ENCODE measurements at regions of chr22 and their contacts with region 1.

Region 1: GRCh38 chr22:29766632-29767170 is at the start of gene ZMAT5:
- DNase-seq: peak; percentile 97
- H3K4me3 ChIP-seq: peak within 1 kb of the TSS; percentile 61 to 92 (median 77)
- H3K27ac ChIP-seq: peak within 1 kb of the TSS; percentile 78 to 90 (median 84)
- H3K4me1 ChIP-seq: peaks cover 29 to 37% (median 32%) of the 10 kb centered on the region in 4 donors
- H3K27me3 ChIP-seq: no peaks in the 10 kb centered on the region
- CTCF ChIP-seq: no peak
- EP300 ChIP-seq: no peak
- POLR2A ChIP-seq: no peak
- total RNA-seq, gene ZMAT5: 13.3 to 33.8 (median 23.1) TPM

Region 2: DNA sequence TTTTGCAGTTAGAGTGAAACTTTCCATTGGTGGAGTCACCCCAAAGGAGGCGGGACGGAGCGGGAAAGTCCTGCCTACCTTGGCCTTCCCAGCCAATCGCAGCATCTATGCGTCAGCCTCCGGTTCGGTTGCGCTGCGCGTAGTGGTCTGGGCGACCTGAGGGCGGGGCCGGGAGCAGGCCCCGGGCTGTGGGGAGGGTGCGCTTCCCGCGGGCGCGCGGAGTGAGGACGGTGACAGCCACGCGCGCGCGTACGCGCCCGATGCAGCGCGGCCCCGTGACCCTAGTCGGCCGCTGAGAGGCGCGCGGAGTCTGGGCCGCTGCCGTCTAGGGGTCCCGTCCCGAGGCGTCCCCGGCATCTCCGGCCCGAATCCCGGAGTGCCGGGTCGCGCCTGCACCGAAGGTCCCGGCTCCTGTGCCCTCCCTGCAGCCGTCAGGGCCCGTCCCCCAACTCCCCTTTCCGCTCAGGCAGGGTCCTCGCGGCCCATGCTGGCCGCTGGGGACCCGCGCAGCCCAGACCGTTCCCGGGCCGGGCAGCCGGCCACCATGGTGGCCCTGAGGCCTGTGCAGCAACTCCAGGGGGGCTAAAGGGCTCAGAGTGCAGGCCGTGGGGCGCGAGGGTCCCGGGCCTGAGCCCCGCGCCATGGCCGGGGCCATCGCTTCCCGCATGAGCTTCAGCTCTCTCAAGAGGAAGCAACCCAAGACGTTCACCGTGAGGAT is 163.2 kb before region 1 on chr22 and contains the start of gene NF2:
- intact Hi-C with region 1: loop called (anchors 10 kb)
- DNase-seq: peak; percentile 99
- H3K4me3 ChIP-seq: peak within 1 kb of the TSS; percentile 63 to 91 (median 84)
- H3K27ac ChIP-seq: peak within 1 kb of the TSS; percentile 90 to 95 (median 94)
- H3K4me1 ChIP-seq: peaks cover 15 to 32% (median 26%) of the 10 kb centered on the region in 4 donors
- H3K27me3 ChIP-seq: no peaks in the 10 kb centered on the region
- CTCF ChIP-seq: peak in 2 of 3 experiments; percentile 2 to 8
- EP300 ChIP-seq: no peak
- POLR2A ChIP-seq: no peak
- total RNA-seq, gene NF2: 34.5 to 47.3 (median 42.0) TPM

Region 3: DNA sequence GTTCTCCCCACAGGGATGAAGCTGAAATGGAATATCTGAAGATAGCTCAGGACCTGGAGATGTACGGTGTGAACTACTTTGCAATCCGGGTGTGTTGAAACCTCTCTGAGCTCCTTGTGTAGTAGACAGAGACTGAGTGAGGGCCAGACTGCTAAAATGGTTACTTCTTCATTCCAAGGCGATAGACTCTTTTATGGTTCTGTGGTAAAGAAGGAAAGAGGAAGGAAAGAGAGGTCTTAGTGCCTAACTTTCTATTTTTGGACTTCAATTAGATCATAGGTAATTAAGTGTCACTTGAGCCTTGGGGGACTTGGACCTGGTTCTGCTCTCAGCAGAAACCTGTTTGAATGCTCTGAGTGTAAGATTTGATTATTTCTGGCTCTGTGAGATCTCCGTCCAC is 108.5 kb before region 1 on chr22:
- intact Hi-C with region 1: no loop called
- DNase-seq: no peak
- H3K4me3 ChIP-seq: no peak overlapping the region
- H3K27ac ChIP-seq: no peak overlapping the region
- H3K4me1 ChIP-seq: peaks cover 0 to 6% (median 0%) of the 10 kb centered on the region in 4 donors
- H3K27me3 ChIP-seq: no peaks in the 10 kb centered on the region
- CTCF ChIP-seq: no peak
- EP300 ChIP-seq: no peak
- POLR2A ChIP-seq: no peak

Region 4: DNA sequence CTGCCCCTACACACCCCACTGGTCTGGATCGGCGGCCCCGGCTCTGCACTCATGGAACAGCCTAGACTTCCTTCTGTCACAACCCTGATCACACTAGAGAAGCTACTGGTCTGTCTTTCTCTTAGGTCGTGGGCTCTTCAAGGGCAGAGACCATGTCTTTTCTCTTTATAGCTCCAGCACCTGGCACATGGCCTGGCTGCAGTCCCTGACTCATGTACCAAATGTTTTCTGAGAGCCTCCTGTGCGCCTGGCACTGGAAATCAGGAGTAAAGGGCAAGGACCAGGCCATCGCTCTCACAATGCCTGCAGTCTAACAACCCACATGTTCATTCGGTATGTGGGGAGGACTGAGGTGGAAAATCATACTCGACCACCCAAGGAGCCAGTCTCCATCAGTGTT is 63.9 kb after region 1 on chr22:
- intact Hi-C with region 1: no loop called
- DNase-seq: no peak
- H3K4me3 ChIP-seq: no peak overlapping the region
- H3K27ac ChIP-seq: no peak overlapping the region
- H3K4me1 ChIP-seq: peaks cover 0 to 11% (median 4%) of the 10 kb centered on the region in 4 donors
- H3K27me3 ChIP-seq: no peaks in the 10 kb centered on the region
- CTCF ChIP-seq: no peak
- EP300 ChIP-seq: no peak
- POLR2A ChIP-seq: no peak

Region 5: DNA sequence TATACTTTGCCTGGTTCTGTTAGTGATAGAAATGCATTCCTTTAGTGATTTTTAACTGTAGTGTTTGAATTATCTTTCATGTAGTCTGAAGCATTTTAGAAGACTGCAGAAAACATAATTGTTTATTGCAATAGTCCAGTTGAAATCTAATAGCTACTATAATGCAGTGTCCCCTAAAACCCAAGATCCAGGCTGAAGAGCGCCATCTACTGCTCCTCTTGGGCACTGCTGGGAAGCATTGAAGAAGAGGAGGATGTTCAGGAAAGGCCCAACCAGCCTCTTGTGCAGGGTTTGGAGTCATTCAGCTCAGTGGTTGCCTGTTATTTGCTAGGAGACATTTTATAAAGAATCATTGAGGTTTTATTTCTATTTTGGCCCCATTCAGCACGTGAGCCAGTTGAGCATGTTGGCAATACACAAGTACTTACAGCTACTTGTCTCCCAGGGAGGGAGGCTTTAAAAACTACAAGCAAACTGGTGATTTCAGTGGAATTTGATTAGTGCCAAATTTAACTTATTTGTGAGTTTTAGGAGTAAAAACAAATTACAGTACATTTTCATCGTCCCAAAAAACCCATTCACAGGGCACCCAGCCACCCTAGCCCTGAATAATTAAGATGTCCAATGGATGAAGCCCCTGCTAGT is 238.6 kb after region 1 on chr22:
- intact Hi-C with region 1: loop called (anchors 10 kb)
- DNase-seq: no peak
- H3K4me3 ChIP-seq: no peak overlapping the region
- H3K27ac ChIP-seq: no peak overlapping the region
- H3K4me1 ChIP-seq: peaks cover 0 to 20% (median 9%) of the 10 kb centered on the region in 4 donors
- H3K27me3 ChIP-seq: no peaks in the 10 kb centered on the region
- CTCF ChIP-seq: peak; percentile 92 to 97 (median 96)
- EP300 ChIP-seq: no peak
- POLR2A ChIP-seq: no peak

Measured in esophagus muscularis mucosa (tissue), 4 donors.